Adrenal gland (tissue), 19 donors: ENCODE measurements at regions of chr3 and their contacts with region 1.

Region 1: DNA sequence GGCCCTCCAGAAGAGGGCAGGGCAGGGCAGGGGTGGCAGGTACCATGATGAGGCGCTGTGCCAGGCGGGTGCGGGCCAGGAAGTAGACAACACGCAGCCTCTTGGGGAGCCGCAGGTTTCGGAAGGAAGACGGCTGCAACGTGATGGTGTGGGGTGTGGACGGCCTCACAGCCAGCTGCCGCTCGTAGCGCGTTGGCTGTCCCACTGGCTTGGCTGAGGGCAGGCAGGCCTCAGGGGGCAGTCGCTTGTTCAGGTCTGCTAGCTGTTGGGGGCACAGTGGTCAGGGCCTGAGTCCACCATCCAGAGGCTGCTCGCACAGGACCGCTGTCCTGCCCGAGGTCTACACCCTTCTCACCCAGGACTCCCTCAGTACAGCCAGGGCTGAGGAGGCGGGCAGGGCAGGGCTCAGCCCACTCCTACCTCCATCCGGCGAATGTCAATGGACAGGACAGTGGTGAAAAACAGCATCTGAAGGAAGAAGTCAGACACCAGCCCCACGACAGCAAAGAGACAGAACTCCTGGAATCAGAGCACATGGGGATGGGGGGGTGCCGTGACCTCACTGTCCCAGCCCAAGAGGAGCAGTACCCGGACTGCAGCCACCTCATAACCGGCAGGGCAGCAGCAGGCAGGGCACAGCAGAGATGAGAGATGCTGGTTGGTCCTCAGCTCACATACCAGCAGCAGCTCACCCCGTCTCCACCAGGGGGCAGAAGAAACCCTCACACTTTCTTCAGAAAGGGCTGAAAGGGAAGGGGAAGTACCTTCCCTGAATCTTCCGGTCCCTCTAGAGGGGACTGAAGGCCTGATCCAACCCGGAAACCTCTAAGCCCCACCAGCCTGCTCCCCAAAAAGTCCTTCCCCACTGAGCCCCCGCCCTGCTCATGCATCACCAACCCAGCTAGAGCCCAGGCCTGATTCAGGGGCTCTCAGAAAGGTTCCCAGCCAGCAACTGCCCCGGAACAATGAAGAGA is 40.0 kb downstream of the PTPN23 start:
- DNase-seq: peak; percentile 87 to 97 (median 93)
- H3K4me3 ChIP-seq: no peak overlapping the region
- H3K27ac ChIP-seq: peak overlapping the region; percentile 49 to 78 (median 66)
- H3K4me1 ChIP-seq: peaks cover 9 to 18% of the 10 kb centered on the region in 2 donors
- H3K27me3 ChIP-seq: no peaks in the 10 kb centered on the region
- CTCF ChIP-seq: peak; percentile 89 to 98 (median 96)
- POLR2A ChIP-seq: no peak

Region 2: DNA sequence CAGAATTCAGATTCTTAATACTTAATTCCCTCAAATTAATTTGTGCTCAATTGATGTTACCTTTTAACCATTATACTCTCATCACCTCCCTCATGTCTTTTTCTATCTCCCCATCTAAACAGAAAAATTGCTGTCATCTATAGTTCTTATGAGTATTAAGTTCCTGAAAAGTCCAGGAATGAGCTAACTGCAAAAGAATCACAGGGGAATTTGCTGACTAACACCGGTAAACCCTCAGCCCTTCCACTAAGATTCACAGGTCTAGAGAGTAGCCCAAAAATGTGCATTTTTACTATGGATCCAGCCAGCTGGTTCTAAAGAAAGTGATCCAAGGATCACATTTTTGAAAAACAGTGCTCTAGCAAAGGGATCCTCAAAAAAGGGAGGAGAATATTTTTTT is 323.8 kb before region 1 on chr3:
- intact Hi-C with region 1: no loop called
- DNase-seq: no peak
- H3K4me3 ChIP-seq: no peak overlapping the region
- H3K27ac ChIP-seq: peak overlapping the region in 1 of 5 donors; percentile 10
- H3K4me1 ChIP-seq: peaks cover 0 to 8% of the 10 kb centered on the region in 2 donors
- H3K27me3 ChIP-seq: no peaks in the 10 kb centered on the region
- CTCF ChIP-seq: no peak
- POLR2A ChIP-seq: no peak

Region 3: GRCh38 chr3:47475570-47476329 is 55.0 kb after region 1 on chr3 and contains the start of gene SCAP:
- intact Hi-C with region 1: loop called (anchors 2 to 5 kb)
- DNase-seq: peak; percentile 94 to 97 (median 95)
- H3K4me3 ChIP-seq: peak within 1 kb of the TSS; percentile 39 to 94 (median 84)
- H3K27ac ChIP-seq: peak within 1 kb of the TSS; percentile 68 to 95 (median 74)
- H3K4me1 ChIP-seq: peaks cover 17 to 40% of the 10 kb centered on the region in 2 donors
- H3K27me3 ChIP-seq: no peaks in the 10 kb centered on the region
- CTCF ChIP-seq: peak; percentile 91 to 98 (median 95)
- POLR2A ChIP-seq: peak; percentile 40 to 78
- total RNA-seq, gene SCAP: 126 to 954 (median 170) TPM

Region 4: GRCh38 chr3:47513125-47513929 is 92.5 kb after region 1 on chr3 and contains the start of gene ELP6:
- intact Hi-C with region 1: loop called (anchors 5 to 10 kb)
- DNase-seq: peak; percentile 96 to 98 (median 97)
- H3K4me3 ChIP-seq: peak within 1 kb of the TSS; percentile 15 to 82 (median 59)
- H3K27ac ChIP-seq: peak within 1 kb of the TSS; percentile 47 to 96 (median 89)
- H3K4me1 ChIP-seq: peaks cover 0 to 12% of the 10 kb centered on the region in 2 donors
- H3K27me3 ChIP-seq: no peaks in the 10 kb centered on the region
- CTCF ChIP-seq: peak; percentile 24 to 68 (median 60)
- POLR2A ChIP-seq: peak; percentile 38 to 67
- total RNA-seq, gene ELP6: 41.3 to 125 (median 45.4) TPM

Region 5: DNA sequence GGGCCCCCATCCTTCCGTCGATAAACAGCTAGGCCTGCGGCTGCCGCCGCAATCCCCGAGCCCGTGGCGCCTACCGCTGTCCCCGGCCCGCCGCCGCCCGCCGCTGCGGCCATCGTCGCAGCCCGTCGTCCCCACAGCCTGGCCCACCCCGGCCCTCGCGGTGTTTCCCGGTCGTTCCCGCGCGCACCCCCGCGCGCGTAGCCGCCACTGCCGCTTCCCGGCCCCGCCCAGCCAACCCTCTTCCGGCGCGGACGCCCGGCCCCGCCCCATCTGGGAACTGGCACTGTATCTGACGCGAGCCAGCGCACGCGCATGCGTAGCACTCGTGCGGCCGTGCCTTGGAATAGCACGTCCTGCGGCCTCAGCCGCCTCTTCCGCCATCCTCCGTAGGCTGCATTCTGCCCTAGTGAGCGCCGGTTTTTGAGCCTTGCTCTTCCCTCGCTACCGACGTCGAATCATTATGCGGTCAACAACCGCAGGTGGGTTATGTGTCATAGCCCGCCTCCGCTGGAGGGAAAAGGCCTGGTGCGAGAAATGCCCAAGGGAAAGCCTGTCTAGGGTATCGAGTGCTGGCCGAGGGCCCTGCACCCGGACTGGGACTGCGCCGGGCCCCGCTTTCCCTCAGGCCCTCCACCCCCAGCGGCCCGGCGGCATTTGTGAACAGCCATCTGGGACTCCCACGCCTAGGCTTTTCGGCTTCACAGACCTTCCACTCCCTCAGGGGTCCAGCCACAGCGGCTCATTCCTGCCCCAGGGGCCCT is 361.1 kb after region 1 on chr3 and contains the start of gene SMARCC1:
- intact Hi-C with region 1: loop called in 1 of 2 experiments (anchors 5 kb)
- DNase-seq: peak; percentile 97 to 99 (median 98)
- H3K4me3 ChIP-seq: peak within 1 kb of the TSS; percentile 34 to 85 (median 64)
- H3K27ac ChIP-seq: peak within 1 kb of the TSS; percentile 89 to 99 (median 96)
- H3K4me1 ChIP-seq: peaks cover 0 to 26% of the 10 kb centered on the region in 2 donors
- H3K27me3 ChIP-seq: no peaks in the 10 kb centered on the region
- CTCF ChIP-seq: peak in 3 of 6 experiments; percentile 14 to 25 (median 18)
- POLR2A ChIP-seq: peak; percentile 89 to 94
- total RNA-seq, gene SMARCC1: 12.1 to 47.4 (median 29.6) TPM

Region 6: GRCh38 chr3:47799733-47800132 is 378.9 kb after region 1 on chr3:
- intact Hi-C with region 1: loop called in 1 of 2 experiments (anchors 10 kb)
- DNase-seq: no peak
- H3K4me3 ChIP-seq: no peak overlapping the region
- H3K27ac ChIP-seq: no peak overlapping the region
- H3K4me1 ChIP-seq: peaks cover 12 to 21% of the 10 kb centered on the region in 2 donors
- H3K27me3 ChIP-seq: no peaks in the 10 kb centered on the region
- CTCF ChIP-seq: peak in 3 of 6 experiments; percentile 10 to 12 (median 11)
- POLR2A ChIP-seq: no peak